ENCODE measurements at regions of chr5 and their contacts with region 1.

Region 1: DNA sequence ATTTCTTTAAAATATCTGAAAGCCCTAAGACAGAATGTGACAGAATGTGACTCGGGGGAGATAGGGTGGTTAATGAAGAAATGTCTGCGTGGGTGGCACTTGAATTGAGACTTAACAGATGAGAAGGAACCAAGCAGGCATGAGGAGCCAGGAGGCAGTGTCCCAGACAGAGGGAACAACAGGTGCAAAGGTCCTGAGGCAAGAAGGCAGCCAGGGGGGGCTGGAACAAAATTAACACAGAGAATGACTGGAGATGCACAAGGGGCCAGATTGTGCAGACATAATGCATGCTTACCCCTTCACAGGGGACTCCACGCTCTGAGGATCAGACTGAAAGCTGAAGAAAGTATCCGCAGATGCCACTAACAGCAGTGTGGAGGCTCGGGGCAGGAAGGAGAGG is 1.7 kb downstream of the LMAN2 start:
- DNase-seq: no peak
- H3K4me3 ChIP-seq: peak overlapping the region; percentile 100
- CTCF ChIP-seq: no peak

Region 2: DNA sequence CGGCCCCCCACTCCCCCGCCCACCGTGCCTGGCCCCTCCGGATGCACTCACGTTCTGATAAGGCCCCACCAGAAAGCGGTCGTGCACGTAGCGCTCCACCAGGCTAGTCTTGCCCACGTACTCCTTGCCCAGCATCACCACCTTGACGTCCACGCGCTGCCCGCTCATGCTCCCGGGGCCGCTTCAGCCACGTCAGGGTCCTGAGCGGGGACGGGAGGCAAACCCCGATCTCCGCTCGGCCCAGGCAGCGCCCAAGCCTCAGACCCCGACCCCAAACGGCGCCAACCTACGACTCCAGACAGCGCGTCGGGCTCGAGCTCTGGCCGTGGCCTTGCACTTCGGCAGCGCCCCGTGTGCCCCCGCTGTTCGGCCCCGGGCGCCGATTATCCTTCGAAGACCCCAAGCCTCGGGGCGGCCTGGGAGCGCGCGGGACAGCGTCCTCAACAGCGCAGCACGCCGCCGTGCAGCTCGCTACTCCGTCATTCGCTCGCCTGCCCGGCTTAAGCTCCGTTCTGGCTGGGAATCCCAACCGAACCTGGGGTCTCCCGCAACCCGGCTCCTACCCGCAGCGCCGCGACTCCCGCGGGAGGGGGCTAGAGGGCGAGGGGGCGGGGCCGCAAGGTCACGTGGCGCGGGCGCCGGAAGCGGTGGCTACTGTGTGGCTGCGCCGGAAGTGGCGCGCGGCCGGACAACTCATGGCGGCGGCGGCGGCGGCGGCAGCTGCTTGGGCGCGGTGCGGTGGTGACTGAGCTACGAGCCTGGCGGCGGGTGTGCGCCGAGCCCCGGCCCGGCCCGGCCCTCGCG is 46.4 kb before region 1 on chr5 and contains the starts of genes PRELID1 and RAB24:
- in situ Hi-C with region 1: no loop called
- DNase-seq: peak; percentile 42
- H3K4me3 ChIP-seq: peak within 1 kb of the TSS; percentile 64
- CTCF ChIP-seq: peak; percentile 37

Region 3: DNA sequence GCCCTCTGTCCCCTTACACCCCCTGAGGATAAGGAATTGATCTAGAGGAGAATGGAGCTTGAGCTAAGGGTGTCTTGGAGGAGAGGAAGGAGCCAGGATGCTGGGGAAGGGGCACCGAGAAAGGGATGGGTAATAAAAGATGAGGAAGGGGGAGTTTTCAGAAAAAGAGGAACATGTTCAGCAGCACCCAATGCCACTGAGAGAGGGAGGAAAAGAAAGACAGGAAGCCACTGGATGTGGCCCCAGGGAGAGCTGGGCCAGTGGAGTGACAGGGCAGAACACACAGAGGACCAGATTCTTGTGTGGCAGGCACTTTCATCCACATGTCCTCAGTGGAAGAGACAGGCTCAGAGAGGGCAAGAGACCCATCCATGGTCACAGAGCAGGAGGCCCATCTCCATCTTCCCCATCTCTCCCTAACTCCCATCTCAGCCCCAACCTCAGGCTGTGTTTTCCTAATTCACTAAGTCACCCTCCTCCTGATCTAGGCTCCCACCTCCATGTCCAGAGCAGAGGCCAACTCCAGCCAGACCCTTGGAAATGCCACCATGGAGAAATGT is 43.5 kb after region 1 on chr5:
- in situ Hi-C with region 1: no loop called
- DNase-seq: no peak
- H3K4me3 ChIP-seq: no peak overlapping the region
- CTCF ChIP-seq: no peak

Region 4: DNA sequence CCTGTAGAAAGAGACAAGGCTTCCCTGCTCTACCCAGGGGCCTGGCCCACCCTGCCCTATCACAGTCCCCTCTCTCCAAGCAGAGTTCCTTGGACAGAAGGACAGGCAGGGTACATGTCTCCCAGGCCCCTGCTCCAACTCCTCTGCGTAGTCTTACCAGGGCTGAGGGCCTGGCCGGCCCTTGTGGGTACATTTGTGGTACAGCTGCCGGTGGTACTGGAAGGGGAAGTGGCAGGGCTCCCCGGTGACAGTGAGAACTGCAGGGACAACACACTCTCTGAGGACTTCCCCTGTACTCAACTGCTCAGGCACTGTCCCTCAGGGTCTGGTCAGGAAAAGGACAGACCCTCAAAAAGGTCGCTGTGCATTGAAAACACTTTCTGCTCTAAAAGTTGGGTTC is 56.0 kb after region 1 on chr5:
- in situ Hi-C with region 1: loop called (anchors 5 kb)
- DNase-seq: no peak
- H3K4me3 ChIP-seq: no peak overlapping the region
- CTCF ChIP-seq: no peak